ENCODE measurements at regions of chr1 and their contacts with region 1.

Region 1: DNA sequence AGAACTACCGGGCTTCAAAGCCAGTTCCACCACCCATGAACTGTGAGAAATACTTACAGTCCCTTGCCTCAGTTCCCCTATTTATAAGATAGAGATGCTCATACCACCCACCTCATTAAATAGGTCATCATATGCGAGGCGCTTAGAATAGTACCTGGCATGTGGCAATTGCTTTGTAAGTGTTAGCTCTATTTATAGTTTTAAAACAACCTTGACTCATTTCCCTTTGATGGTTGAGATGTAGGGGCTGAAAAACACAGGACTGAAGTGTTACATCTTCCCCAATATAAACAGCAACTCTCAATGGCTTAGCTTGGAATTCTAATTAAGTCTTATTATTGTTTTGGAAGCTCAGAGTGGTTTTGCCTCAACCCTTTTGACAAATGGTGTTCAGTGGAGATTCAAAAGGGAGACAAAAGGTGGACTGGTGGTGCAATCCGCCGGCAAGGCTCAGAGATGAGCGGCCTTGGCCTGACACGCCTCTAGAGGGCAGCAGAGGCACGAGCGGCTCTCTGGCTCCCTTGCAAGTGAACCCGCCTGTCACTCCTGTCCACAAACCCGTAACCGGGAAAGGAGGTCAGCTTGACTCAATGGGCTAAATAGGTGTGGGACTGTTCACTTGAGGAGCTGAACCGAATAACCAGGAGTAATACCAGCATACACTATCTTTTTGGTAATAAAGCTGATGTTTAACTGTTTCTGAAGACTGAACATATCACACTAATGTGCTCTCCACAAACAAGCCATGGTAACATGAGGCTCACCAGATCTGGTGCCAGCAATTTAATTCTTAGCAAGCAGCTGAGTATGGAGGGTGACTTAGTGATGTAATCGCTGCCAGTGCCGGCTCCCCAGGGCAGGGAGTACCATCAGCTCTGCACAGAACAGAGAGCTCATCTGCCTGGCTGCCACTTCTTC is 19.5 kb upstream of the SMYD2 start:
- DNase-seq: peak; percentile 88
- ATAC-seq: peak; percentile 96
- H3K4me3 Mint-ChIP-seq: no peak overlapping the region
- H3K27ac Mint-ChIP-seq: no peak overlapping the region
- H3K4me1 Mint-ChIP-seq: peaks cover 20% of the 10 kb centered on the region
- H3K27me3 Mint-ChIP-seq: peaks cover 49% of the 10 kb centered on the region

Region 2: DNA sequence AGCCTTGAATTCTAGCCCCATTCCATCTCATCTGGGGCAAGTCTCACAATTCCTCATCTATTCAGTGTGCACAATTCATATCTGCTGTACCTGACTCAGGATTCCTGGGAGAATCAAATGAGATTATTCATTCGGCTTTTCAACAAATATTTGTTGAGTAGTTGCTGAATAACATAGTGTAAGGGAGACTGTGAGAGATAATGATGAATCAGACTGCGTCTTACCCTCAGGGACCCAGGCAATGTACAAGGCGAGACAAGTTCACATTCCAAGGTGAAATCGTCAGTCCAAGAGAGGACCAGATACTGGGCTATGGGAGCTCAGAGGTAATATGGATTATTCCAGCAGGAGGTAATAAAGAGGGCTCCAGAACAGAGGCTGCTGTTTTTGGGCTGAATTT is 48.3 kb before region 1 on chr1:
- CTCF ChIA-PET with region 1: interaction called, 22 read pairs
- POLR2A ChIA-PET with region 1: no interaction called
- DNase-seq: no peak
- ATAC-seq: no peak
- H3K4me3 Mint-ChIP-seq: no peak overlapping the region
- H3K27ac Mint-ChIP-seq: no peak overlapping the region
- H3K4me1 Mint-ChIP-seq: no peaks in the 10 kb centered on the region
- H3K27me3 Mint-ChIP-seq: peaks cover 25% of the 10 kb centered on the region

Region 3: DNA sequence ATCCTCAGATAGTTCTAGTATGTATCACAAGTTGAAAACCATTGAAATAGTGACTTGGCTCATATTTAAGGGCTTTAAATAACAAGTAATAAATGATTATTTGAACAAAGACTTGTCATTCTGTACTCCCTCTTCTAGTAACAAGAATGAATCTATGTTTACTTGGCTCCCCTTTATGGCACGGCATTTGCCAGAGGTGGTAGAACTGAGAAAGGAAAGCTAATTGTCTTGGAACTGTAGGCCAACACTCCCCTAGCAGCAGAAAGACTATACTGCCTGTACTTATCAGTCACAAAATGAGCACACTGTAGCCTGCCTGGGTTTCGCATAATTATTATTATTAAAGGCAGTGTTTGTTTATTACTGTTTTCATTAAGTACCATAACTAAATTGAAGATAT is 10.1 kb before region 1 on chr1:
- CTCF ChIA-PET with region 1: interaction called, 30 read pairs
- POLR2A ChIA-PET with region 1: no interaction called
- DNase-seq: no peak
- ATAC-seq: no peak
- H3K4me3 Mint-ChIP-seq: no peak overlapping the region
- H3K27ac Mint-ChIP-seq: no peak overlapping the region
- H3K4me1 Mint-ChIP-seq: no peaks in the 10 kb centered on the region
- H3K27me3 Mint-ChIP-seq: peaks cover 20% of the 10 kb centered on the region

Region 4: GRCh38 chr1:214303141-214303930 is 41.9 kb after region 1 on chr1:
- CTCF ChIA-PET with region 1: interaction called, 11 read pairs
- POLR2A ChIA-PET with region 1: no interaction called
- DNase-seq: no peak
- ATAC-seq: no peak
- H3K4me3 Mint-ChIP-seq: no peak overlapping the region
- H3K27ac Mint-ChIP-seq: no peak overlapping the region
- H3K4me1 Mint-ChIP-seq: peaks cover 9% of the 10 kb centered on the region
- H3K27me3 Mint-ChIP-seq: no peaks in the 10 kb centered on the region

Region 5: DNA sequence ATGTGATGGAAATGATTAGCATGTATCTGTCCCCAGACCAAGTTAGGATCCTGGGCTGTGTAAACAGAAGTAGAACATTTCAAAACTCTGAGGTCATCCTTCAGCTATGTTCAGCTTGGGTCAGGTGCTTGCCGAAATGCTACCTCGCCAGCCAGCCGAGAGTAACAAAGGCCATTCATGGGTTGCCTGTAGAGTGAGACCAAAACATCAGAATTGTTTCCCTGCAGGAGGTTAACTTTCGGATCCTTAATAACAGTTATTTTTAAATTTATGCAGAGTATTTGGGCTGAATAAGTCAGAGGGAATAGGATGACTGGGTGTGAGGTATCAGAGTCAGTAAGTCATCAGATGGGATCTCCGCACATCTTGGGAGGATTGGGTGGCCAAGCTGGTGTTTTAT is 55.1 kb after region 1 on chr1:
- CTCF ChIA-PET with region 1: interaction called, 56 read pairs
- POLR2A ChIA-PET with region 1: no interaction called
- DNase-seq: no peak
- ATAC-seq: no peak
- H3K4me3 Mint-ChIP-seq: no peak overlapping the region
- H3K27ac Mint-ChIP-seq: no peak overlapping the region
- H3K4me1 Mint-ChIP-seq: peaks cover 3% of the 10 kb centered on the region
- H3K27me3 Mint-ChIP-seq: no peaks in the 10 kb centered on the region

Region 6: GRCh38 chr1:214584805-214585766 is 323.6 kb after region 1 on chr1:
- CTCF ChIA-PET with region 1: interaction called, 24 read pairs
- POLR2A ChIA-PET with region 1: no interaction called
- DNase-seq: no peak
- ATAC-seq: peak; percentile 33
- H3K4me3 Mint-ChIP-seq: no peak overlapping the region
- H3K27ac Mint-ChIP-seq: no peak overlapping the region
- H3K4me1 Mint-ChIP-seq: no peaks in the 10 kb centered on the region
- H3K27me3 Mint-ChIP-seq: peaks cover 11% of the 10 kb centered on the region

Measured in activated CD8-positive, alpha-beta T cell treated with anti-CD3 and anti-CD28 coated beads, Interleukin-2, amount 10 ng/mL, durations not matched to agents 7 days and 5 days (primary cell).